Activated CD8-positive, alpha-beta T cell treated with anti-CD3 and anti-CD28 coated beads for 36 hours (primary cell): ENCODE measurements at regions of chr1 and their contacts with region 1.

Region 1: DNA sequence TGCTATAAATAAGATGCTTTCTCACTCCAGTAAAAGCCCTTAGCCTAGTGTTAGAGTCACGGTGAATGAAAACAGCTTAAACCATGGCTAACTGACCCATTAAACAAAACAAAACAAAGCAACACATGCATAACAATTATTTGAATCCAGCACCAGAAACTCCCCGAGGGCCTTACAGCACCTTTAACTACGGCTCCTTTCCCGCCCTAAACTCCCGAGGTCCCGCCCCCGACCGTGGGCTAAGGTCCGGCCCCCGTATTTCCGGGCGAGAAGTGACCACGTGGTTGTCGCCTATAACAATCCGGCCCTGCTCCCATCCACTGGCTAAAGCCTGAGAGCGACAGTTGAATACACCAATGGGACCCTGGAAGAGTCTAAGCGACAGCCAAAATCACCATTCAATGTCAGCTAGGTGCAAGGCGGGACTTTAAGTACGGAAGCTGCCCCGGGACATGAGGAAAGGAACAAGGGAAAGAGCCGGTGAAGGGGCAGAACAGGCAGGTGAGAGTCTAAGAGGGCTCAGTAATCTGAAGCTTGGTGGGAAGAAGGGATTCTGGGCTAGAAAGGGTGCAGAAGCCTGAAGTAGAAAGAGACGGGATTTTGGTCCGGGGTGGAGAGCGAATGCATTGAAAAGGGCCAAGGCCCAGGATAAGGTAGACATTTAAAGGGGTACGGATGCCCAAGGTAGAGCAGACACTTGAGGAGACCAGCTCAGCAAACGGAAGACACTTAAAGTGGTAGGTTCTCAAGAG is at the start of gene FLAD1:
- DNase-seq: peak; percentile 98
- ATAC-seq: peak; percentile 99
- H3K4me3 Mint-ChIP-seq: no peak within 1 kb of the TSS
- H3K27ac Mint-ChIP-seq: no peak within 1 kb of the TSS
- H3K4me1 Mint-ChIP-seq: peaks cover 12% of the 10 kb centered on the region
- H3K27me3 Mint-ChIP-seq: no peaks in the 10 kb centered on the region
- CTCF ChIP-seq: no peak
- total RNA-seq, gene FLAD1: 31.5 to 32.9 TPM

Region 2: GRCh38 chr1:154943649-154944400 is 39.2 kb before region 1 on chr1:
- CTCF ChIA-PET with region 1: interaction called, 4 read pairs
- POLR2A ChIA-PET with region 1: interaction called, 10 read pairs
- intact Hi-C with region 1: no loop called
- DNase-seq: peak; percentile 59
- ATAC-seq: no peak
- H3K4me3 Mint-ChIP-seq: no peak overlapping the region
- H3K27ac Mint-ChIP-seq: peak overlapping the region; percentile 92
- H3K4me1 Mint-ChIP-seq: peaks cover 55% of the 10 kb centered on the region
- H3K27me3 Mint-ChIP-seq: no peaks in the 10 kb centered on the region
- CTCF ChIP-seq: peak; percentile 92

Region 3: DNA sequence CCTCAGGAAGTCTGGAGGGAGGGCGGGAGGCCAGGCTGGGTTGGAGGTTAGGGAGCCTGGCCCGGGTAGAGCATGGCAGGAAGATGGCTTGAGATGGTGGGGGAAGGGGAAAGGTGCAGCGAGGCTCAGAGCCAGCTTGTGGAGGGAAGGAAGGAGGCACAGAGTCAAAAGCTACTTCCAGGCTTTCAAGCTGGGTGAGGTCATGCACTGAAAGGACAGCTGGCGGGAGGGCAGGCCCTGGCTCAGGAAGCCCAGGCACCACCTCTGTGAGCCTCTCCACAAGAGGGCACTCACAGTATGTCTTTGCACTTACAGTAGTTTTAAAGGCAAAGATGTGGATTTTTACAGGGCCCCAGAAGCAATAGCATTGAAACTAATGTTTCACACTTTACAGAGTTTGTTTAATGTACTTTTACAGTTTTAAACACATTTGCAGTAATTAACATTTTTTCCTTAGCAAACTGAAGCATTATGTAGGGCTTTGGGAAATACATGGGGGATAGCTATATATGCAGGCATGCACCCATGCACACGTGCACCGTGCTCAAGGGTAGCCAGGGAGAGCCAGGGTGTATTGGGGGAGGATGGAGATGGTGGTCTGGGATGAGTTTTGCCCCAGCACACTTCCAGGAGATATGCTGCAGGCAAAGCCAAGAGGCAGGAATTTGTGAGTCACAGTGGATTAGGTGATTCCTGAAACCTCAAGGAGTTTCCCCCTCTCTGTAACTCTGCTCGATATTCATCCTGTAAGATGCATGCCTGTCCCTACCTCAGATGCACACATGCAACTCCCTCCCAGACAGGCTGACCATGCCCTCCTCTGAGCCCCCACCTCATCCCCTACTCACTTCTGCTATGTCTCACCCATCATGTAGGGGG is 62.0 kb after region 1 on chr1:
- CTCF ChIA-PET with region 1: interaction called, 17 read pairs
- POLR2A ChIA-PET with region 1: interaction called, 3 read pairs
- intact Hi-C with region 1: no loop called
- DNase-seq: peak; percentile 82
- ATAC-seq: peak; percentile 98
- H3K4me3 Mint-ChIP-seq: no peak overlapping the region
- H3K27ac Mint-ChIP-seq: peak overlapping the region; percentile 10
- H3K4me1 Mint-ChIP-seq: peaks cover 5% of the 10 kb centered on the region
- H3K27me3 Mint-ChIP-seq: peaks cover 2% of the 10 kb centered on the region
- CTCF ChIP-seq: peak; percentile 60